ENCODE measurements at regions of chr7 and their contacts with region 1.

Region 1: GRCh38 chr7:65750511-65751344 is 122.1 kb upstream of the VKORC1L1 start:
- DNase-seq: peak; percentile 57 to 94
- H3K4me3 ChIP-seq: peak overlapping the region; percentile 87 to 98
- H3K27ac ChIP-seq: peak overlapping the region; percentile 87 to 93
- H3K4me1 ChIP-seq: peaks cover 0 to 11% of the 10 kb centered on the region in 2 donors
- H3K27me3 ChIP-seq: no peaks in the 10 kb centered on the region
- CTCF ChIP-seq: peak in 2 of 3 experiments; percentile 13 to 34

Region 2: GRCh38 chr7:64999165-65000004 is 751.3 kb before region 1 on chr7:
- intact Hi-C with region 1: loop called (anchors 5 kb)
- DNase-seq: peak in 1 of 2 donors; percentile 68
- H3K4me3 ChIP-seq: no peak overlapping the region
- H3K27ac ChIP-seq: peak overlapping the region in 1 of 2 donors; percentile 83
- H3K4me1 ChIP-seq: peaks cover 0 to 33% of the 10 kb centered on the region in 2 donors
- H3K27me3 ChIP-seq: no peaks in the 10 kb centered on the region
- CTCF ChIP-seq: no peak

Region 3: GRCh38 chr7:65981965-65982792 is 231.5 kb after region 1 on chr7 and contains the start of gene GUSB:
- intact Hi-C with region 1: loop called (anchors 5 kb)
- DNase-seq: peak; percentile 56 to 94
- H3K4me3 ChIP-seq: peak within 1 kb of the TSS; percentile 79 to 91
- H3K27ac ChIP-seq: peak within 1 kb of the TSS; percentile 76 to 80
- H3K4me1 ChIP-seq: peaks cover 6 to 12% of the 10 kb centered on the region in 2 donors
- H3K27me3 ChIP-seq: no peaks in the 10 kb centered on the region
- CTCF ChIP-seq: no peak
- total RNA-seq, gene GUSB: 8.7 TPM

Region 4: GRCh38 chr7:66204822-66205740 is 454.4 kb after region 1 on chr7 and contains the start of gene TPST1:
- intact Hi-C with region 1: loop called (anchors 10 kb)
- DNase-seq: peak; percentile 37 to 94
- H3K4me3 ChIP-seq: peak within 1 kb of the TSS; percentile 80 to 90
- H3K27ac ChIP-seq: peak within 1 kb of the TSS; percentile 59 to 65
- H3K4me1 ChIP-seq: peaks cover 0 to 3% of the 10 kb centered on the region in 2 donors
- H3K27me3 ChIP-seq: no peaks in the 10 kb centered on the region
- CTCF ChIP-seq: peak; percentile 56 to 73 (median 67)
- total RNA-seq, gene TPST1: 21.9 TPM

Region 5: DNA sequence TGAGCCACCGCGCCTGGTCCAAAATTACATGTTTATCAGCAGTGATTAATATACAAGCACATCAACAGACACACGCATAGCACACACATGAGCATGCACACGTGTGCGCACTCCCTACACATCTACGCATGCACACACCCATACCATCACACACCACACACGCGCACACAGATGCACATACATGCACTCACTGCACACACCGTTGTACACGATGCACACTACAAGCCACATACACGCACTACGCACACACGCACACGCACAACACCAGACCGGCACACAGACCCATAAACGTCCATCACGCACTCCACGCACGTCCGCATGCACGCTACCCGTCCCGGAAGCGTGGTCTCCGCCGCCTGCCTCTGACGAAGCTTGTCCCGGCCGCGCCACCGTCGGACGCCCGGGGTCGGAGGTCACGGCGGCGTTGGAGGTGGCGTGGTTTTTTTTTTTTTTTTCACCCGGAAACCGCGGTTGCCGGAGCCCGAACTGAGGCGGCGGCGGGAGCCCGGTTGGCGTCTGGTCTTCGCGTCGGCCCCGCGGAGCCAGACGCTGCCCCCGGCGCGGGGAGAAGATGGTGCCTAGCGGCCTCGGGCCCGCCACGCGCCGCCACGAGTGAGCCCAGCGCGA is 1170.2 kb after region 1 on chr7 and contains the start of gene TMEM248:
- intact Hi-C with region 1: loop called (anchors 10 kb)
- DNase-seq: peak; percentile 38 to 94
- H3K4me3 ChIP-seq: peak within 1 kb of the TSS; percentile 86 to 97
- H3K27ac ChIP-seq: peak within 1 kb of the TSS; percentile 74 to 86
- H3K4me1 ChIP-seq: peaks cover 6 to 25% of the 10 kb centered on the region in 2 donors
- H3K27me3 ChIP-seq: no peaks in the 10 kb centered on the region
- CTCF ChIP-seq: no peak
- total RNA-seq, gene TMEM248: 278 TPM

Measured in ascending aorta (tissue), 2 donors.